A549 (cell line): ENCODE measurements at regions of chr9 and their contacts with region 1.

Region 1: DNA sequence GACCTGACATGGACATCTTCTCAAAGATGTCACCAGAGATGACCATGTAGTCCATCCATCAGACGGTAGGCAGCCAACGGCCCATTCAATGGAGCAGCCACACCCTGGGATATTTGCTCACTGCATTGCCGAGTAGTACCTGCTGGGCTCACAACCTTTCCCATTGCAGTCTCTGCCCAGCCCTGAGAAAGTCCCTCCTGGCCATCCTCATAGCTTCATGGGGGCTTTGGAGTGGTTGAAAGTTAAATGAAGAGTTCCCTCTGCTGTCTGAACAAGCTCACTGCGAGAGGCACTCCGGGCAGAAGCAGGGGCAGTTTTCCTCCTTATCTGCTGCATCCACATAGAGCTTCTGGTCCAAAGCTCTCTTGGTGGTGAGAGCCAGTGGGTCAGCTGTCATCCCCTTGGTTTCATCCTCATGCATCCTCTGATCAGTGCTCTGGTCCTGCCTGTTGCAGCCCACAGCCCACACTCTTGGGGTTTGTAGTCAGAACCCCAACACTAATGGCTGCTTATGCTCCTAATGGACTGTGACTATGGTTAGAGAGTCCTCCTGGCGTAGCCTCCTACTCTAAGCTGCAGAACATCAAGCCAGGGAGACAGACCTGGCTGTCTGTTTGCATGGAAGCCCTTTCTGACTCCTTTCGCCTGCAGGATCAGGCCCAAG is 23.4 kb downstream of the TNFSF8 start:
- DNase-seq: peak; percentile 49 to 78
- ATAC-seq: peak; percentile 57 to 78
- H3K4me3 ChIP-seq: no peak overlapping the region
- H3K27ac ChIP-seq: peak overlapping the region; percentile 80 to 81
- H3K4me1 ChIP-seq: peaks cover 54% of the 10 kb centered on the region
- CTCF ChIP-seq: peak; percentile 78
- EP300 ChIP-seq: no peak
- POLR2A ChIP-seq: no peak
- RAD21 ChIP-seq: peak; percentile 95 to 96

Region 2: GRCh38 chr9:114653556-114654159 is 253.4 kb before region 1 on chr9:
- CTCF ChIA-PET with region 1: interaction called, 12 read pairs
- POLR2A ChIA-PET with region 1: no interaction called
- DNase-seq: peak; percentile 64 to 72
- ATAC-seq: peak; percentile 62 to 88; a peak in 3 of 6 replicates
- H3K4me3 ChIP-seq: no peak overlapping the region
- H3K27ac ChIP-seq: peak overlapping the region in 1 of 2 experiments; percentile 43; a peak in 2 of 6 replicates
- H3K4me1 ChIP-seq: 0 out of 3 replicates have a peak, but pooled peaks cover 3% of the 10 kb centered on the region
- CTCF ChIP-seq: peak; percentile 91
- EP300 ChIP-seq: no peak
- POLR2A ChIP-seq: no peak
- RAD21 ChIP-seq: peak; percentile 89 to 97

Region 3: DNA sequence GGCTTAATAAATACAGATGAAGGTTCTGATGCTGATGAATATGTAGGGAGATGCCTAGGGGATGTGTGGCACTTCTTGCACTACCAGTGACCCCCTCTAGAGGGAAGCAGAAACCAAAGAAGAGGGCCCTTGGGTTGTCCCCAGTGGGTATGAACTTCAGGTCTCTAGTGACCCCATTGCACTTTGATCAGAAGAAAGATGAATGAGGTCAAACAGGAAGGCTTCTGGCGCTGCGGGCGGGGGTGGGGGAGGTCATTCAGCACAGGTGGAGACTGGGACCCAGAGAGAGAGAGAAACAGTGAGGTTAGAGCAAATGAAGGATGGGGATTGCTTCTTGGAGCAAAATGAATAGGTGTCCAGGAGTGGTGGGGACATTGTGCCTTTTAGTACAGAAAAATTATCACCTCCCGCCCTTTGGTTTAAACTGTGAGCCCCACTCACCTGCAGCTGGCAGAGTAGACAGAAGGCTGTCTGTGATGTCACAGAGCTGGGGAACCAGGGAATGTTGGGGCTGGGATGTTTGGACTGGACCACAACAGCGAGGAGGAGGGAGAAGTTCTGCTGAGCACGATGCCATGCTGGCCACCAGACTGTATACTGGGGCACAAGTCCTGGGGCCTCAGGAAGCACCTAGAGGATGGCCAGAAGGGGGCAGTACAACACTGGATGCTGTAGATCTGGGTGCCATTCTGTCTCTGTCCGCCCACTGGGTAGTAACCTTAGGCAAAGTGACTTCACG is 225.3 kb before region 1 on chr9 and contains the start of gene TEX48:
- CTCF ChIA-PET with region 1: interaction called, 271 read pairs
- POLR2A ChIA-PET with region 1: interaction called, 6 read pairs
- DNase-seq: peak; percentile 66 to 88
- ATAC-seq: peak; percentile 80 to 87
- H3K4me3 ChIP-seq: no peak within 1 kb of the TSS
- H3K27ac ChIP-seq: peak within 1 kb of the TSS; percentile 9 to 48; a peak in 3 of 6 replicates
- H3K4me1 ChIP-seq: peaks cover 32% of the 10 kb centered on the region
- CTCF ChIP-seq: peak; percentile 61
- EP300 ChIP-seq: no peak
- POLR2A ChIP-seq: no peak
- RAD21 ChIP-seq: peak; percentile 76 to 92
- polyA plus RNA-seq, gene TEX48: 0.16 TPM in 1 of 2 replicates, not detected in the other

Region 4: DNA sequence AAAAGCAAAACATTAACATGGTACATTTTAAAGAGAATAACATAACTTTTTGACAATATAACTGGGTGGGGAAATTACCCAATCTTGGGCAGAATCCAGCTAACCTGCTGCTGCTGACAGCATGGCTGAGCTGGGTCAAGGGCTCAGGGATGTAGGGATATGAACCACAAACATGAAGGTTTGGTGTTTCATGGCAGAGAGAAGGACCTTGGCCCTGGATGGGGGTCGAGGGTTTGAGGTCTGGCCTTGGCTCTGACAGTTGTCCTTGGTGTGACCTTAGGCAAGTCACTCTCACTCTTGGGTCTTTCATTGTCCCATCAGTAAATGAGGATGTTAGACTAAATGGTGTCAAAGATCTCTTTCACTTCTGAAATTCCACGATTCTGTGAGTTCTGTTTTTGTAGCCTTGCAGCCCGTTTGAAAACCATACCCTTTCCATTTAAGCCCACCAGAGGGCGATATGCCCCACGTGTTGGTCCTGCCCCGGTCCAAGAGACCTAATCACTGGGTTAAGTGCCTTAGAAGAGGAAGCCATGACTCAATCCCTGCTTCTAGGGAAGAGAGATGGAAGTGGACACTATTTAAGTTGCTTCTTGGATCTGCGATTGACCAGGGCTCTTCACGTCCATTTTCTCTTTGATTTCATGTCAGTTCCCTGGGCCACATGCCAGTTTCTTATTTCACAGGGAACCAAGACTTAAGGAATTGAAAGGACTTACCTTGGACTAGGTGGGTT is 168.3 kb before region 1 on chr9:
- CTCF ChIA-PET with region 1: interaction called, 243 read pairs
- POLR2A ChIA-PET with region 1: interaction called, 4 read pairs
- DNase-seq: peak; percentile 71 to 84
- ATAC-seq: peak; percentile 89 to 97
- H3K4me3 ChIP-seq: no peak overlapping the region
- H3K27ac ChIP-seq: peak overlapping the region; percentile 24 to 68; a peak in 5 of 6 replicates
- H3K4me1 ChIP-seq: peaks cover 26% of the 10 kb centered on the region
- CTCF ChIP-seq: peak; percentile 89
- EP300 ChIP-seq: no peak
- POLR2A ChIP-seq: no peak
- RAD21 ChIP-seq: peak; percentile 98 to 99

Region 5: GRCh38 chr9:114894801-114895433 is 12.1 kb before region 1 on chr9:
- CTCF ChIA-PET with region 1: interaction called, 19 read pairs
- POLR2A ChIA-PET with region 1: interaction called, 3 read pairs
- DNase-seq: peak; percentile 60 to 85
- ATAC-seq: peak; percentile 89 to 91
- H3K4me3 ChIP-seq: no peak overlapping the region
- H3K27ac ChIP-seq: peak overlapping the region; percentile 65 to 77
- H3K4me1 ChIP-seq: peaks cover 41% of the 10 kb centered on the region
- CTCF ChIP-seq: no peak
- EP300 ChIP-seq: peak in 1 of 2 experiments; percentile 39; a peak in 1 of 5 replicates
- POLR2A ChIP-seq: no peak
- RAD21 ChIP-seq: no peak

Region 6: DNA sequence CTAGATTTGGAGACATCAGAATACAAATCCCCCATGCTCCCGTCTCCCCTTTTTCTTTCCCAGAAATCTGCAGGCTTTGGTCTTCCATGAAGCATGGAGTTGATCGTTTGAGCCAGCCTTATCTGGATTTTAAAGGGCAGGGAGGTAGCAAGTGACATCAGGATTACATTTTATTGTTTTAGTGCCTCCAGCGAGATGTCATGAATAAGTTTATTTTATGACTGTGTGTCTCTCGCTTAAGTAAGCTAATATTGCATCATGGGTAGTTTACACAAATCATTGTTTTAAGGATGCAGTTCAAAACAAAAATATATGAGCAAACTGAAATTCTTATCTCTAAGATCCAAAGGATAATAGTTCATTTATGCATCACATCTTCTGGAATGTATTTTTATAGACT is 74.0 kb after region 1 on chr9:
- CTCF ChIA-PET with region 1: interaction called, 12 read pairs
- POLR2A ChIA-PET with region 1: no interaction called
- DNase-seq: peak in 1 of 2 experiments; percentile 60
- ATAC-seq: peak; percentile 36 to 54; a peak in 1 of 6 replicates
- H3K4me3 ChIP-seq: no peak overlapping the region
- H3K27ac ChIP-seq: no peak overlapping the region
- H3K4me1 ChIP-seq: peaks cover 16% of the 10 kb centered on the region
- CTCF ChIP-seq: no peak
- EP300 ChIP-seq: peak in 1 of 2 experiments; percentile 53; a peak in 1 of 5 replicates
- POLR2A ChIP-seq: no peak
- RAD21 ChIP-seq: no peak

Region 7: DNA sequence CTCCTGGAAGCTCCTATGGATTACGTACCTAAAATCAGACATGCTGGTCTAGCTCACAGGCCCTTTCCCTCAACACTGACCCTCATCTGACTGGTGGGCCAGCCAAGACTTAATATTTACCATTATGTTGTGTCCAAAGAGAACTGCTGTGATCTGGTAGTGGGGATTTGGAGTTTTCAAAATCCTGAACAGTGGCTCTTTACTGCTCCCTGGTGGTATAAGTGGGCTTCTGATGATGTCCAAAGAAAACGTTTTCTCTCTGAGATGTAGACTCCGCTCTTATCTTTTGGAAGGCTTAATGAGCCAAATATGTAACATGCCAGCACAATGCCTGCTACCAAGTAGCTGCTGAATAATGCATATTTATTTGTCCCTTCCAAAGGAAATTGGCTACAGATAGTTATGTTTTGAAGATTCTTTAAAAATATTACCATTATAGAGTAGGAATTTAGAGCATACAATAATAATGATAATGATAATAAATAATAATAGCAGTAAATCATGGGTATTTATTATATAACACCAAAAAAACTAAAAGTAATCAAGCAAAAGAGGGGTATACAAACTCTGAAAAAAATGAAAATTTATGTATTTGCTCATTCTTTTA is 617.5 kb after region 1 on chr9:
- CTCF ChIA-PET with region 1: interaction called, 10 read pairs
- POLR2A ChIA-PET with region 1: no interaction called
- DNase-seq: peak; percentile 38 to 55
- ATAC-seq: peak in 1 of 2 experiments; percentile 80; a peak in 4 of 6 replicates
- H3K4me3 ChIP-seq: no peak overlapping the region
- H3K27ac ChIP-seq: no peak overlapping the region
- H3K4me1 ChIP-seq: no peaks in the 10 kb centered on the region
- CTCF ChIP-seq: peak; percentile 87
- EP300 ChIP-seq: no peak
- POLR2A ChIP-seq: no peak
- RAD21 ChIP-seq: peak; percentile 94 to 95